CD8-positive, alpha-beta T cell (primary cell): ENCODE measurements at regions of chr15 and their contacts with region 1.

Region 1: GRCh38 chr15:66035901-66036300 is 166.6 kb downstream of the RAB11A start:
- DNase-seq: no peak
- ATAC-seq: no peak
- H3K4me3 ChIP-seq: no peak overlapping the region
- H3K4me3 Mint-ChIP-seq: no peak overlapping the region
- H3K27ac ChIP-seq: no peak overlapping the region
- H3K27ac Mint-ChIP-seq: no peak overlapping the region
- H3K4me1 ChIP-seq: no peaks in the 10 kb centered on the region
- H3K4me1 Mint-ChIP-seq: no peaks in the 10 kb centered on the region
- H3K27me3 ChIP-seq: no peaks in the 10 kb centered on the region
- H3K27me3 Mint-ChIP-seq: peaks cover 24% of the 10 kb centered on the region
- CTCF ChIP-seq: no peak

Region 2: DNA sequence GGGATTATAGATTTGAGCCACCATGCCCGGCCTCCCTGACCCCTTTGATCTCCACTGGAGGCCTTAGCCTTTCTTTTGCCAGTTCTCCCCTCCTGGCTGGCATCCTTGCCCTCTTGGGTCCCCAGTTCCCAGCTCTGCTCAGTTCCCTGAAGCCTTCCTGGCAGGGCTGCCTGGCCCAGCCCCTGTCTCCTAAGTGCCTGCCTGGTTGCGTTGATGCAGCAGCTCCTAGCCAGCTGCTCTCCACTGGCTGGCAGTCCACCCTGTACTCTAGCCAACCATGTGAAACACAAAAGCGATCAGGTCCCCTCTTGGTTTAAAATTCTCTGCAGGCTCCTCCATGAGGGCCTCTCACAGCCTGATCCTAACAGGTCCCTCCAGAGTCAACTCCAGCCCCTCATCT is 18.1 kb after region 1 on chr15:
- CTCF ChIA-PET with region 1: no interaction called
- POLR2A ChIA-PET with region 1: no interaction called
- intact Hi-C with region 1: loop called in 1 of 2 experiments (anchors 1 kb)
- DNase-seq: no peak
- ATAC-seq: no peak
- H3K4me3 ChIP-seq: no peak overlapping the region
- H3K4me3 Mint-ChIP-seq: no peak overlapping the region
- H3K27ac ChIP-seq: no peak overlapping the region
- H3K27ac Mint-ChIP-seq: no peak overlapping the region
- H3K4me1 ChIP-seq: no peaks in the 10 kb centered on the region
- H3K4me1 Mint-ChIP-seq: no peaks in the 10 kb centered on the region
- H3K27me3 ChIP-seq: no peaks in the 10 kb centered on the region
- H3K27me3 Mint-ChIP-seq: peaks cover 10% of the 10 kb centered on the region
- CTCF ChIP-seq: no peak